Endothelial cell of umbilical vein (primary cell): ENCODE measurements at regions of chr6 and their contacts with region 1.

Region 1: DNA sequence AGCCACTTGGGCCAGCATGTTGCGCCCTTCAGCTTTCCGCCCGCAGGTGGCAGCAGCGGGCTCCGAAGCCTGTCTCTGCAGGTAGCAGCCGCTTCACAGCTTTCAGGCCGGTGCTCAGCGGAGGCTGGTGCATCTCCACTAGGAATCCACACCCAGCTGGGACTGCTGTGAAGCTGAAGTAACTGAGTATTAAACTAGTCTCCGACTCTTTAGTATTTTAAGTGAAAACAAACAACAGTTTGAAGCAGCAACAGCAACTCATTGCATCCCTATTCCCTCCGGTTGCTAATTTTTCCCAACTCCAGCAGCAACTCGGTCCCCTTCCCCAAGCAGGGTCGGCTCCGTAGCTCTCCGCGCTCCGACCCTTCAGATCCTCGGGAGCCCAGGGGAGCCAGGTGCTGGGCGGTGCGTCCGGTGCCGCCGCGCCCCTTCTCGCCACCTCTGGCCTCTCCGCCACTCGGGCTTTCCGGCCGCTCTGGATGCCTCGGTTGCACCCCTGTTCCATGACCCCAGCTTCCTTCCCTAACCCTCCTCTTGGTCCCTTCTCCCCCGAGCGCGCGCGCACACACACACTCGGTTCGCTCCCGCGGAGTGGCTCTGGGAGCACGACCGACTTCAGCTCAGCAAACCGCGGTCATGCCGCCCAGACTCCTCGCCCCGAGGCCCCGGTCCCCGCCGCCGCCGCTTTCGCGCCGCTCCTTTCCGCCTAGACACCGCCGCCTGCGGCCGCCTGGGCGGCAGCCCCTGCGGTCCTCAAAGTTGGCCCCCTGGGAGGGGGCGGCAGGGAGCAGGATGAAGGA is 768 bp upstream of the NKAIN2 start:
- DNase-seq: peak; percentile 80
- H3K4me3 ChIP-seq: peak overlapping the region; percentile 36 to 68 (median 56)
- H3K27ac ChIP-seq: no peak overlapping the region
- H3K4me1 ChIP-seq: peaks cover 9% of the 10 kb centered on the region
- H3K27me3 ChIP-seq: peaks cover 17 to 25% of the 10 kb centered on the region in 2 experiments
- CTCF ChIP-seq: peak; percentile 89 to 94
- POLR2A ChIP-seq: no peak

Region 2: GRCh38 chr6:123733180-123733956 is 69.5 kb before region 1 on chr6:
- CTCF ChIA-PET with region 1: no interaction called
- POLR2A ChIA-PET with region 1: no interaction called
- dilution Hi-C with region 1: no loop called
- intact Hi-C with region 1: no loop called
- DNase-seq: no peak
- H3K4me3 ChIP-seq: no peak overlapping the region
- H3K27ac ChIP-seq: no peak overlapping the region
- H3K4me1 ChIP-seq: no peaks in the 10 kb centered on the region
- H3K27me3 ChIP-seq: no peaks in the 10 kb centered on the region
- CTCF ChIP-seq: no peak
- POLR2A ChIP-seq: no peak

Region 3: DNA sequence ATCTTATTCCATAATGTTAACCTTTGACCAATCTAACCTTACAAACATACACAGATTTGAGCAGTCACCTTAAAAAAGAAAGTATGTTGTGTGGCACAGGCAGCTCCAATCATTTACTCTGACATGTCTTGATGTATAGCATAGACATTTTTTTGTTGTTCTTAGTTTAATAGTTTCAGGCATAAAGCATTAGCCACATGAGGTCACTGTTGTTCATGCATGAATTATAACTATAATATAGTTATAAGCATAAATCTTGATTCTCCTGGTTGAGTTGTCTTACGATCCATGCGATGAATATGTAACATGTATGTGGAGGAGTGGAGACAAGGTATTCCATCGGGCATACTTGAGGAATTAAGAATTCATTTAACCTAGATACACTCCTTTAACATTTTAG is 25.3 kb before region 1 on chr6:
- CTCF ChIA-PET with region 1: interaction called, 13 read pairs
- POLR2A ChIA-PET with region 1: no interaction called
- dilution Hi-C with region 1: no loop called
- intact Hi-C with region 1: no loop called
- DNase-seq: peak; percentile 46
- H3K4me3 ChIP-seq: no peak overlapping the region
- H3K27ac ChIP-seq: no peak overlapping the region
- H3K4me1 ChIP-seq: no peaks in the 10 kb centered on the region
- H3K27me3 ChIP-seq: no peaks in the 10 kb centered on the region
- CTCF ChIP-seq: peak in 1 of 2 donors; percentile 14
- POLR2A ChIP-seq: no peak

Region 4: DNA sequence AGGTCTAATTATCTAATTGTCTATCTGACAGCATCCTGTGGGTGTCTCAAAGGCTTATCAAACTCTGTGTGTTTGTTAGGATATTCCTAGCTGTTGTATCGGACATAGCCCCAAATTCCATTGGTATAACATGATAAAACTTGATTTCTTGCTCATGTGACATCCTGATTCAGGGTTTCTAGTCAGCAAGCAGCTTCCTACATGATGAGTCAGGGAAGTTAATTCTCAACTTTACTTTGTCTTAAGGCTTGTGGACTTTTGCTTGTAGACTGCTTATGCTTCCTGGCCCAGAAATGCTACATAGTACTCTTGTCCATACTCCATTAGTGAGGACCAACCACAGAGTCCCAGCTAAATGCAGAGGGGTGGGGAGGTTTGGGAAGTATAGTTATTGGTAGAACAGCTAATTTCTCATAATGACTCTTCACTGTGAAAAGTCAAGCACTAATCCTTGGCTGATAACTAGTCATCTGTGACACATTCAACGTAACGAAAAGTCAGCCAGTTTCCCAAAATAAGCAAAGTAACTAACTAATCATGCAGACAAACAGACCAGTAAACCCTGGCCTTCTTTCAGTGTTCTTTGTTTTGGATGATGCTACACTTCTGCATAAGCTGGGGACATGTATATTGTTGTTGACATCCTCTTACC is 26.5 kb after region 1 on chr6:
- CTCF ChIA-PET with region 1: interaction called, 11 read pairs
- POLR2A ChIA-PET with region 1: no interaction called
- dilution Hi-C with region 1: no loop called
- intact Hi-C with region 1: no loop called
- DNase-seq: peak; percentile 44
- H3K4me3 ChIP-seq: no peak overlapping the region
- H3K27ac ChIP-seq: no peak overlapping the region
- H3K4me1 ChIP-seq: peaks cover 14% of the 10 kb centered on the region
- H3K27me3 ChIP-seq: no peaks in the 10 kb centered on the region
- CTCF ChIP-seq: no peak
- POLR2A ChIP-seq: no peak

Region 5: DNA sequence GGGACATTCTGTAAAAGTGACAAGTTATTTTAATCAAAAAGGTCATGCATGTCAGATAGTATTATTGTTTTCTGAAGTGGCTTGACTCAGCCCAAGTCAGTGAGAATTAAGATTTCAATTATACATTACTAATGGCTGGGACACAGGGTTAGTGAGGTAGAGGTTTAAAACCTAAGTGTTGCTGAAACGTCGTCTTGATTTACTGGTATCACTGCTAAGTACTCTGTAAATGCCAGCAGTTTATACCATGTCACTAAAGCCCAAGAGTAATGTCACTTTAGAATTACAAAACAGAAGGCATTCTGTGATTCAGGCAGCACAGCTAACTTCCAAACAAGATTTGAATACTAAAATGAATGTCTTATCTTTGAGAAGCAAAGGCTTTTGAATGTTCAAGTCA is 177.4 kb after region 1 on chr6:
- CTCF ChIA-PET with region 1: no interaction called
- POLR2A ChIA-PET with region 1: no interaction called
- dilution Hi-C with region 1: no loop called
- intact Hi-C with region 1: no loop called
- DNase-seq: no peak
- H3K4me3 ChIP-seq: no peak overlapping the region
- H3K27ac ChIP-seq: no peak overlapping the region
- H3K4me1 ChIP-seq: no peaks in the 10 kb centered on the region
- H3K27me3 ChIP-seq: no peaks in the 10 kb centered on the region
- CTCF ChIP-seq: no peak
- POLR2A ChIP-seq: no peak

Region 6: GRCh38 chr6:124223611-124224345 is 420.9 kb after region 1 on chr6:
- CTCF ChIA-PET with region 1: no interaction called
- POLR2A ChIA-PET with region 1: no interaction called
- dilution Hi-C with region 1: no loop called
- intact Hi-C with region 1: loop called (anchors 10 kb)
- DNase-seq: no peak
- H3K4me3 ChIP-seq: no peak overlapping the region
- H3K27ac ChIP-seq: no peak overlapping the region
- H3K4me1 ChIP-seq: no peaks in the 10 kb centered on the region
- H3K27me3 ChIP-seq: no peaks in the 10 kb centered on the region
- CTCF ChIP-seq: no peak
- POLR2A ChIP-seq: no peak

Region 7: GRCh38 chr6:124487623-124488431 is 684.9 kb after region 1 on chr6:
- CTCF ChIA-PET with region 1: no interaction called
- POLR2A ChIA-PET with region 1: no interaction called
- dilution Hi-C with region 1: no loop called
- intact Hi-C with region 1: loop called (anchors 10 kb)
- DNase-seq: peak; percentile 81
- H3K4me3 ChIP-seq: no peak overlapping the region
- H3K27ac ChIP-seq: peak overlapping the region; percentile 49
- H3K4me1 ChIP-seq: peaks cover 22% of the 10 kb centered on the region
- H3K27me3 ChIP-seq: no peaks in the 10 kb centered on the region
- CTCF ChIP-seq: no peak
- POLR2A ChIP-seq: no peak

Region 8: DNA sequence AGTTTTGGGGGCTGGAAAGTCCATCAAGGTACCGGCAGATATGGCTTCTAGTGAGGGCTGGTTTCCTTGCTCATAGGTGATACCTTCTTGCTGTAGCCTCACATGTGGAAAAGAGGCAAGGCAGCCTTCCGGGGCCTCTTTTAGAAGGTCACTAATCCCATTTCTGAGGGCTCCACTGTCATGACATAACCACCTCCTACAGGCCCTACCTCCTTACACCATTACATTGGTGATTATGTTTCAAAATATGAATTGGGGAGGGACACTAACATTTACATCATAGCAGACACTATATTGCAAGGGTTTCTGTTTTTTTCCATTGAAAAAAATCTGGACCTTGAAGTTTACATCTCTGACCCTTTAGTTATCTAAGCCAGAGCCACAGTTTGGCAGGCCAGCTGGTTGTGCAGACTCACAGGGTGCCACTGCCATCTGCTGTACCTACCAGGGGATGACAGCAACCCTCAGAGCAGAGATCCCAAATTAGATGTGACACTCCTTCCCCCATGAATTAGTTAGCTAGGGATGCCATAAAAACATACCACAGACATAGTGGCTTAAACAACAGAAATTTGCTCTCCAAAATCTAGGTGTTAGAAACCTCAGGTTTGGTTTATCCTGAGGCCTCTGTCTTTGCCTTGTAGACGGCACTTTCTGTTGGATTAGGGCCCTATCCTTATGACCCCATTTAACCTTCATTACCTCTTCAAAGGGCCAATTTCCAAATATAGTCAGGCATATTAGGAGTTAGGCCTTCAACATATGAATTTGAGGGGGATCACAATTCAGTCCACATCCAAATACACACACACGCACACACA is 993.0 kb after region 1 on chr6:
- CTCF ChIA-PET with region 1: interaction called, 35 read pairs
- POLR2A ChIA-PET with region 1: no interaction called
- dilution Hi-C with region 1: no loop called
- intact Hi-C with region 1: loop called (anchors 1 kb)
- DNase-seq: no peak
- H3K4me3 ChIP-seq: no peak overlapping the region
- H3K27ac ChIP-seq: no peak overlapping the region
- H3K4me1 ChIP-seq: no peaks in the 10 kb centered on the region
- H3K27me3 ChIP-seq: peaks cover 2 to 8% of the 10 kb centered on the region in 2 experiments
- CTCF ChIP-seq: peak; percentile 19 to 31
- POLR2A ChIP-seq: no peak